Panc1 (cell line): ENCODE measurements at regions of chr16 and their contacts with region 1.

Region 1: GRCh38 chr16:87492721-87493607 is at the start of gene ZCCHC14:
- DNase-seq: peak; percentile 72
- ATAC-seq: peak; percentile 95
- H3K4me3 ChIP-seq: peak within 1 kb of the TSS; percentile 55 to 70
- H3K27ac ChIP-seq: peak within 1 kb of the TSS; percentile 84
- H3K4me1 ChIP-seq: peaks cover 9% of the 10 kb centered on the region
- H3K27me3 ChIP-seq: no peaks in the 10 kb centered on the region
- CTCF ChIP-seq: no peak
- total RNA-seq, gene ZCCHC14: 35.0 TPM

Region 2: DNA sequence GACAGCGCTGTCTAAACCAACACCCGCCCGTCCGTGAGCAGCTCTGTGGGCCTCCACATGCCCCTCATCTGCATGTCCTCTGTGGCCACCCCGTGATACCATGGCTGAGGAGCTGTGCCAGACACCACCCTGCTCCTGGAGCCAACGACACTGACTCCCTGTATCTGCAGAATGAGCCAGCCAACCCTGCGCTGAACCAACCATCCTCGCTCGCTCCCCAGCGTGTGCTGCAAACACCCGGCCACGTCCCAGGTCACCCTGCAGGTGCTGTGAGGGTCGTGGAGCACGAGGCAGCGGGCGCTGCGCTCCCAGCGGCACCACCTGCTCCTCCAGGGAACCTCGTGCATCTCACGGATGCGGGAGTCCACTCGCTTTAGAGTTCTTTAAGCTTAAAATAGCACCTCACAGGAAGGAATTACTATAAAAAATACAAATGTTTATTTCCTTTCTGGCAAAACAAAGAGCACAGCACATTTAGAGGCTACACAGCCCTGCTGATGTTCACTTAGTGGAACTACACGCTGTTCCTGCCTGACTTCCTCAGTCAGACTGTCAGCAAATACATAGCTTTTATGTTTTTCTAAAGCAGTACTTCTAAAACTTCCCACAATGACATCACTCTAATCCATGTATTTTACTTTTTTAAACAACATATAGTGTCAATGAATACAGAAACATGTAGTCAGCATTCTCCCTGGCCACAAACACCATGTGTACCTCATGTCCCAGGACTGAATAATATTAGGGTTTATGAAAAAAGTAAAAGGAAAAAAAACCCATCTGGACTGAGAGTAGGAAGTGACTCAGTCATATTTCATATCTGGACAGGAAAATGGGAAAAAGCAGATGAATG is 57.4 kb before region 1 on chr16:
- CTCF ChIA-PET with region 1: no interaction called
- POLR2A ChIA-PET with region 1: no interaction called
- in situ Hi-C with region 1: no loop called
- intact Hi-C with region 1: no loop called
- DNase-seq: no peak
- ATAC-seq: peak; percentile 17; the same call in 1 of the 2 replicates
- H3K4me3 ChIP-seq: no peak overlapping the region
- H3K27ac ChIP-seq: no peak overlapping the region
- H3K4me1 ChIP-seq: no peaks in the 10 kb centered on the region
- H3K27me3 ChIP-seq: no peaks in the 10 kb centered on the region
- CTCF ChIP-seq: no peak

Region 3: GRCh38 chr16:87507351-87508069 is 14.5 kb after region 1 on chr16:
- CTCF ChIA-PET with region 1: no interaction called
- POLR2A ChIA-PET with region 1: interaction called, 10 read pairs
- in situ Hi-C with region 1: no loop called
- intact Hi-C with region 1: no loop called
- DNase-seq: no peak
- ATAC-seq: no peak
- H3K4me3 ChIP-seq: no peak overlapping the region
- H3K27ac ChIP-seq: no peak overlapping the region
- H3K4me1 ChIP-seq: no peaks in the 10 kb centered on the region
- H3K27me3 ChIP-seq: no peaks in the 10 kb centered on the region
- CTCF ChIP-seq: no peak